Endothelial cell of umbilical vein (primary cell): ENCODE measurements at regions of chr2 and their contacts with region 1.

Region 1: GRCh38 chr2:19347619-19348562 is 10.5 kb downstream of the OSR1 start:
- DNase-seq: peak; percentile 98
- H3K4me3 ChIP-seq: peak overlapping the region; percentile 14 to 58 (median 54)
- H3K27ac ChIP-seq: peak overlapping the region; percentile 63
- H3K4me1 ChIP-seq: peaks cover 5% of the 10 kb centered on the region
- H3K27me3 ChIP-seq: peaks cover 20 to 27% of the 10 kb centered on the region in 2 experiments
- CTCF ChIP-seq: no peak
- POLR2A ChIP-seq: peak; percentile 95

Region 2: GRCh38 chr2:18435421-18436037 is 912.4 kb before region 1 on chr2:
- CTCF ChIA-PET with region 1: no interaction called
- POLR2A ChIA-PET with region 1: no interaction called
- dilution Hi-C with region 1: no loop called
- intact Hi-C with region 1: loop called (anchors 5 kb)
- DNase-seq: peak; percentile 75
- H3K4me3 ChIP-seq: no peak overlapping the region
- H3K27ac ChIP-seq: no peak overlapping the region
- H3K4me1 ChIP-seq: peaks cover 5% of the 10 kb centered on the region
- H3K27me3 ChIP-seq: no peaks in the 10 kb centered on the region
- CTCF ChIP-seq: peak; percentile 39 to 51
- POLR2A ChIP-seq: no peak

Region 3: DNA sequence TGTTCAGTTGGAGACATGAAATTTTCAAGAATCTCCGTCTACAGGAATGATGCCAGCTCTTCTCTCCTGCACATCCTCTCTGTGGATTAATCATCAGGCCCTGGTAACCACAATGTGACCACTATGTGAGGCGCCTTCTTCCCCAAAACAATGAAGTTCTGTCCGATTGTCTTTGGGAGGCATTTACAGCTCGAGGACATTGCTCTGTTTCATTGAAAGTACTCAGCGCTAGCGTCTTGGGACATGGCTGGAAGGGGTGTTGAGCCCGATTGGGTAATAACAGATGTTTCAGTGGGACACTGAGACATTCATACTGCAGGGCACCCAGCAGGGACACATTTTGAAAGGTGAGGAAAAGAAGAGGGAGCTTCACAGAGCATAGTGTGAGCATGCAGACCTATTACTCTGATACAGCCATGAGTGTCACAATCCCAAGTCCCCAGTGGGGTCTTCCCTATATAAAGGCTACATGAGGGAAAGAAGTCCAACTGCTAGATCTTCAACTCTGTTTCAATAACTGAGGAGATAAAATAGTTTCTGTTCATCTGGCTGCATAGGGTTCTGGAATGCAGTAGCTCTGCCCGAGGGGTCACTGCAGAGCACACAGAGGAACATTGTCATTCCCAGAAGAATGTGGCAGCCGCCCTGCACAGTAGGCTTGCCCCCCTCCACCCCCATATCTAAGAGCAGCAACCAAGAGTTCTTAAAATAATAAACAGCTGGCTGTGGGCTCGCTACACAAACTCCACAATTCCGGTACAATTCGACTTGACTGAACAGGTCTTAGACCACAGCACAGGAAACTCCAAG is 226.7 kb before region 1 on chr2:
- CTCF ChIA-PET with region 1: no interaction called
- POLR2A ChIA-PET with region 1: no interaction called
- dilution Hi-C with region 1: no loop called
- intact Hi-C with region 1: loop called (anchors 10 kb)
- DNase-seq: no peak
- H3K4me3 ChIP-seq: no peak overlapping the region
- H3K27ac ChIP-seq: no peak overlapping the region
- H3K4me1 ChIP-seq: peaks cover 10% of the 10 kb centered on the region
- H3K27me3 ChIP-seq: no peaks in the 10 kb centered on the region
- CTCF ChIP-seq: no peak
- POLR2A ChIP-seq: no peak

Region 4: DNA sequence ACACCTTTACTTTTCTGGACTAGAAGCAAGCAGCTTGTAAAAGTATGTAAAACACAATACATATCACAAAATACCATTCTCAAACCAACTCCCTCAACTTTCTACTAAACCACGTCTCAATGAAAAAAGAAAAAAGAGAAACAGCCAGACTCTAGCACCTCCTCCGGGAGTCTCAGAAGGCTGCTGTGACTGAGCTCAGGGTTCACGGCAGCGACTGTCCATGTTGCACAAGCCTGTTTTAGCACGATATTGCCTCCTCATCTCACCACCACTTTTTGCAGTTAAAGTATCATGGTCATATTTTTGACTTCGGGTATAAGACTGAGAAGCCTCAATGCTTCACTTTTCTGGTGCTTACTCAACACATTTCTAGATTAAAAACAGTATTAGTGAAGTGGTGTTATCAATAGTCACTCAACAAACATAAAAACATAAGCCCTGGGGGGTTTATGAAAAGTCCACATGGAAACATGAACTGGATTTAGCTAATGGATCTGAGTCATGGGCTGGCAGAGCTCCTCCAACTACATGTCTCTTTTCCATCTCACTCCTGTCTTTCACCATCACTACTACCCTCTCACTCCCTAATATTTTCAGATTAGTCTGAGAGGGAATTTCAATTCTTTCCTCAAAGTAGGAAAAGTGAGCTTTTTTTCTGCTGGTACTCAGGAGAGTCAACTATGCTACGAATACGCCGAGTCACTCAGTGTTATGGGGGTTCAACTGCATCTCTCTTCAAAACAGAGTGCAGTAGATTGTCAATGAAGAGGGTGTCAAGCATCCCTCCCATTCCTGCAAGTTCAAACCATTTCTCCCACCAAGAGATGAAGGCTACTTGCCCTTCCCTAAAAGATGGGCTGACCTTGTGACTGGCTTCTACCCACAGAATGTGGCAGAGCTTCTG is 103.2 kb before region 1 on chr2:
- CTCF ChIA-PET with region 1: no interaction called
- POLR2A ChIA-PET with region 1: no interaction called
- dilution Hi-C with region 1: no loop called
- intact Hi-C with region 1: no loop called
- DNase-seq: no peak
- H3K4me3 ChIP-seq: no peak overlapping the region
- H3K27ac ChIP-seq: no peak overlapping the region
- H3K4me1 ChIP-seq: no peaks in the 10 kb centered on the region
- H3K27me3 ChIP-seq: no peaks in the 10 kb centered on the region
- CTCF ChIP-seq: no peak
- POLR2A ChIP-seq: no peak

Region 5: DNA sequence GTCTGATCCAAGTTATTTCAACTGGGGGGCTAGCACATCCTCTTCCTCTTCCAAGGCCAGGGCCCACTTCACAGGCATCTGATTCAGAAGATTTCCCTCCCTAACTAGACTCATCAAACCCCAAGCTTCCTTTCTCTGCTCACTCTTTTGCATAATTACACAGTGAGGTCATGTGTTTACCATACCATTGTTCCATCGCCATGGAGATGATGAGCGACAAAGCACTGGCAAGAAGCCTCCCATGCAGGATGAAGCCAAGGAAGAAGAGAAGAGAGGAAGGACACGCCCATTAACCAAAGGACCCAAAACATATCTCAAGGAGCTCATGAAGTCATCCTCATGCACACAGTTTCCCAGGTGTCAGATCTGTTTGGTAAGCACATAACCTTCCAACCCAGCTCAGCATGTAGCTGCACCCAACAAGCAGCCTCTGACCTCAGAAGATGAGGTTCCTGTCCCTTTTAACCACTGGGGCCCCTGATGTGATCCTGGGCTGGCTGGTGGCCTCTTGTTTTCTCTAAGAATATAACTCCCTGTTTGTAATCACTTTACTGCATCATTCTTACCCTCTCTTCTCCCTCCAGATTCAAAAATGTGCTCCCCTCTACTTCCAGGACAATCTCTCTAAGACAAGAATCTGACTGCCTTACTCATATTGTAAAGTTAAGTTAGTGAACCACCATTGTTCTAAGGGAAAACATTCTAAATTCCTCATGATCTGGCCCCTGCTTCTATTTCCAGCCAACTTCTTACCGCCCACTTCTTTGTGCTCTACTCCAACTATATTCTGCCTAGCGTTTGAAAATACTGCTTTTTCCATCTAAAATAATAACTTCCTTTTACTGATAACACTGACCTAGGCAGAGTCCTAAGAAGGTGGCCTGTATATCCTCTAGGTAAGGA is 363.8 kb after region 1 on chr2:
- CTCF ChIA-PET with region 1: no interaction called
- POLR2A ChIA-PET with region 1: interaction called, 4 read pairs
- dilution Hi-C with region 1: no loop called
- intact Hi-C with region 1: loop called (anchors 2 kb)
- DNase-seq: peak; percentile 96
- H3K4me3 ChIP-seq: no peak overlapping the region
- H3K27ac ChIP-seq: peak overlapping the region; percentile 72
- H3K4me1 ChIP-seq: peaks cover 35% of the 10 kb centered on the region
- H3K27me3 ChIP-seq: no peaks in the 10 kb centered on the region
- CTCF ChIP-seq: no peak
- POLR2A ChIP-seq: no peak

Region 6: DNA sequence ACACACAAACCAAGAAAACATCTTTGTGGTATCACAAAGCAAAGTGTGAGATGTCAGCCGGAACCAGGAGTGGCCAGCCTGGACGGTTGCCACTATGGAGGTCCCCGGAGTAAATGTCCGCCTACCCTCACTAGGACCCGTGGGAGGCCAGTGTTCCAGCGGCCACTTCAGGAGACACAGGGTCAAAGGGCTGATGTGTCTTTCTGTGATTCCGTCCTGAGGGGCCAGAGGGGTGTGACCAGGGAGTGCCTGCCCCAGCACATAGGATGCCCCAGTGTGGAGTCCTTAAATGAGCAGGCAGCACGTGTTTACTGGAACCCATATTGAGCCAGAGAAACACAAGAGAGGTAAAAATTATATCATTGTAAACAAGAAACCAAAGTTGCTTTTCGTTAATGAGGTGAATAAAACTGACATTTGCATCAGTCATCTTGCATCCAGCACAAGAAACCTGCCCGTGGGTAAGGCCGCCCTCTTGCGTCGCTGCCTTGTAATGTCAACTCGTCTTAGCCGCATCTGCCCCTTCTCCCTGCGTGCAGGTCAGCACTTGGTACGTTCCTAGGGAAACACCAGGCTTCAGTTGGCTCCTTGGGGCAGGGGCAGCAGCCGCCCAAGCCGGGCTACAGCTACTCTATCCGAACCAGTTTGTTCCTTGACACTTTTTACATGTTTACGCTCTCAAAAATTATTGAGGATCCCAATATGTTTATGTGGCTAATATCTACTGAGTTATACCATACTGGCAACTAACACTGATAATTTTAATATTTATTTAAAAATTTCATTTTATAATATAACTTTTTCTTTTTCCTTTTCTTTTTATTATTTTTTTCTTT is 750.2 kb after region 1 on chr2:
- CTCF ChIA-PET with region 1: no interaction called
- POLR2A ChIA-PET with region 1: no interaction called
- dilution Hi-C with region 1: no loop called
- intact Hi-C with region 1: loop called (anchors 2 kb)
- DNase-seq: peak; percentile 94
- H3K4me3 ChIP-seq: no peak overlapping the region
- H3K27ac ChIP-seq: no peak overlapping the region
- H3K4me1 ChIP-seq: peaks cover 4% of the 10 kb centered on the region
- H3K27me3 ChIP-seq: no peaks in the 10 kb centered on the region
- CTCF ChIP-seq: peak; percentile 86 to 93
- POLR2A ChIP-seq: no peak